ENCODE measurements at regions of chr9 and their contacts with region 1.

Region 1: DNA sequence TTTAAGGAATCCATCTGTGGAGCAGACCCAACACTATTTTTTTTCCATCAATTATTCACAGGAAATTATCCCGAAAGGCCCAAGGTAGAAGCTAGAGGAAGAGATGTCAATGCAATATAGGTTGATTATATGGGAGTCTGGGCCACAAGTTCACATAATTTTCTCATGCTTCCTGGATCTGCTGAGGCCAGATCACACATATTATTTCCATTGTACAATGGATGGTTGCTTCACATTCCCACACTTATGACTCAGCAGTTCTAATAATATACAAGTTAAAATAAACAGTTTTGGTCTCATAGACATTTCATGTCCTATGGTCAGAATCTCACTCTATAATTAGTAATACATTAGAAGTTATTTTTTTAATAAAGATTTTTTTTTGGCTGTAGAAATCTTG is 66.0 kb upstream of the PTPRD start:
- DNase-seq: peak; percentile 37
- ATAC-seq: peak; percentile 58
- H3K4me3 ChIP-seq: no peak overlapping the region
- H3K27ac ChIP-seq: peak overlapping the region; percentile 97
- H3K4me1 ChIP-seq: peaks cover 14% of the 10 kb centered on the region
- H3K27me3 ChIP-seq: no peaks in the 10 kb centered on the region
- CTCF ChIP-seq: no peak

Region 2: GRCh38 chr9:9764821-9765220 is 914.0 kb before region 1 on chr9:
- CTCF ChIA-PET with region 1: no interaction called
- POLR2A ChIA-PET with region 1: no interaction called
- intact Hi-C with region 1: no loop called
- DNase-seq: peak; percentile 34
- ATAC-seq: peak; percentile 84
- H3K4me3 ChIP-seq: no peak overlapping the region
- H3K27ac ChIP-seq: no peak overlapping the region
- H3K4me1 ChIP-seq: no peaks in the 10 kb centered on the region
- H3K27me3 ChIP-seq: no peaks in the 10 kb centered on the region
- CTCF ChIP-seq: no peak

Region 3: GRCh38 chr9:10704720-10705119 is 25.9 kb after region 1 on chr9:
- CTCF ChIA-PET with region 1: no interaction called
- POLR2A ChIA-PET with region 1: interaction called, 8 read pairs
- intact Hi-C with region 1: loop called (anchors 2 kb)
- DNase-seq: peak; percentile 58
- ATAC-seq: peak; percentile 80
- H3K4me3 ChIP-seq: no peak overlapping the region
- H3K27ac ChIP-seq: peak overlapping the region; percentile 72
- H3K4me1 ChIP-seq: peaks cover 11% of the 10 kb centered on the region; the same call in 1 of the 2 replicates
- H3K27me3 ChIP-seq: no peaks in the 10 kb centered on the region
- CTCF ChIP-seq: no peak